ENCODE measurements at regions of chr7 and their contacts with region 1.

Region 1: DNA sequence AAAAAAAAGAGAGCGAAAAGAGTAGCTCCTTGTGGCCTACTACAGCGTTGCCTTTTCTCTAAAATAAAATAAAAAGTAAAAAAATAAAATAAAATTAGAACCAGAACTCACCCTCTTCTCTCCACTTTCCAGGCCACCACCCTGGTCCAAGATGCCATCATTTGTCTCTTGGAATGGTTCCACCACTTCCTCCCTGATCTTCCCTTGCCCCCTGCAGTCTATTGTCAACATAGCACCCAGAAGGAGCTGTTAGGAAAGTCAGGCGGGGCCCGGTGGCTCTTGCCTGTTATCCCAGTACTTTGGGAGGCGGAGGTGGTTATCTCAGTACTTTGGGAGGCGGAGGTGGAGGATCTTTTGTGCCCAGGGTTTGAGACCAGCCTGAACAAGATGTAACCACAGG is 7.6 kb upstream of the GRID2IP start:
- DNase-seq: no peak
- H3K4me3 ChIP-seq: no peak overlapping the region
- H3K27ac ChIP-seq: no peak overlapping the region
- H3K27me3 ChIP-seq: no peaks in the 10 kb centered on the region
- CTCF ChIP-seq: peak; percentile 49

Region 2: GRCh38 chr7:6447581-6448199 is 111.1 kb before region 1 on chr7 and contains the start of gene DAGLB:
- CTCF ChIA-PET with region 1: no interaction called
- POLR2A ChIA-PET with region 1: no interaction called
- DNase-seq: peak; percentile 82
- H3K4me3 ChIP-seq: peak within 1 kb of the TSS; percentile 98
- H3K27ac ChIP-seq: peak within 1 kb of the TSS; percentile 90
- H3K27me3 ChIP-seq: no peaks in the 10 kb centered on the region
- CTCF ChIP-seq: no peak
- polyA plus RNA-seq, gene DAGLB: 23.1 and 25.3 TPM in 2 replicates

Region 3: GRCh38 chr7:6516387-6516983 is 42.4 kb before region 1 on chr7:
- CTCF ChIA-PET with region 1: interaction called, 26 read pairs
- POLR2A ChIA-PET with region 1: interaction called, 3 read pairs
- DNase-seq: peak; percentile 55
- H3K4me3 ChIP-seq: no peak overlapping the region
- H3K27ac ChIP-seq: no peak overlapping the region
- H3K27me3 ChIP-seq: no peaks in the 10 kb centered on the region
- CTCF ChIP-seq: peak; percentile 91

Region 4: DNA sequence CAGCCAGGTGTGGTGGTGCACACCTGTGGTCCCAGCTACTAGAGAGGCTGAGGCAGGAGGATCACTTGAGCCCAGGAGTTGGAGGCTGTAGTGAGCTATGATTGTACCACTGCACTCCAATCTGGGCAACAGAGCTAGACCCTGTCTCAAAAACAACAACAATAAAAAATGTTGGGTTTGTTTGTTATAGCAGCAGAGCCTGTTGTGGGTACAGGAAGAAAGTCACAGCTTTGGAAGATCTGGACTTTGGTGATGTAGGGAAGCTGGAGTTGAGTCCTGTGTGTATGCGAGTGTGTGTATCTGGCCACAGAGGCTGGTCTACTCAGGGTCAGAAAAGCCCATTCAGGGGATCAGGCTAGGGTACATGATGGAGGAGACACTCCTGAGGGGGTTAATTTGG is 11.4 kb before region 1 on chr7:
- CTCF ChIA-PET with region 1: interaction called, 16 read pairs
- POLR2A ChIA-PET with region 1: no interaction called
- DNase-seq: no peak
- H3K4me3 ChIP-seq: no peak overlapping the region
- H3K27ac ChIP-seq: no peak overlapping the region
- H3K27me3 ChIP-seq: peaks cover 2% of the 10 kb centered on the region
- CTCF ChIP-seq: no peak